Uterus (tissue), 4 donors: ENCODE measurements at regions of chr22 and their contacts with region 1.

Region 1: DNA sequence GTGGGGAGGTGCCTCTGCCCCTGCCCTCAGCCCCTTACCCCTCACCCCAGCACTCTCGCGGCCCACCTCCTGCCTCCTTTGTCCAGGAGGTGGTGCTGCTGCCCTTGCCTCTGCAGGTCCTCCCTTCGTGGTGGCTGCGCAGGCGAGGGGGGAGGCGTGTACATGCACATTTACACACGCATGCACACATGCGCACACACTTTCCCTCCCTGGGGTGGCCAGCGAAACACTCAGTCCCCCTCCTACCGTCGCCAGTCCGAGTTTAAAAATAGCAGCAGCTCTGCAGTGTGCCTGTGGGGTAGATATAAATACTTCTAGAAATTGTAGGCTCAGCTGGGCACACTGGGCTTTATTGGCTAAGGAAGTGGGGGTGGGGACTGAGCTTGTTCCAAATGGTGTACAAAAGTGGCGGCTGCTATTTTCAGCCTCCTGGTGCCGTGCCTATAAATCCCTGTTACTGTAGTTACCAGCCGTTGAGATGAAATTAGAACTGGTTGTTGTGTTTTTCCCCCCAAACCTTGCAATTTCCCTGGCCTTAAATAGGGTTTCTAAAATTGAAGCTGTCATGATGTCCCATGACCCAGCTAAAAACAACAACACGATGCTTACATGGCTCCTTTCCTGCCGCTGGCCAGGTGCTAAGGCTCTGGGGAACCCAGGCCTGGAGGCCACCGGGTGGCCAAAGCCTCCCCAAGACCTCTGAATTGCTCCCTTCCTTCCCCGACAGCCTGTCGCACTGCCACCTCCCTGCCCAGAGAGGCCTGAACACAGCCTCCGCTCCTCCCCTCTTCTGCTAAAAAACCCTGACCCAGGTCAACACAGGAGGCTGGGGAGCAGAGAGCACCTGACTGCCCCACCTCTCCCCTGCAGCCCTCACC is 12.4 kb downstream of the PICK1 start:
- DNase-seq: peak; percentile 71 to 74
- H3K4me3 ChIP-seq: no peak overlapping the region
- H3K27ac ChIP-seq: peak overlapping the region; percentile 66 to 83
- H3K4me1 ChIP-seq: no peaks in the 10 kb centered on the region
- H3K27me3 ChIP-seq: no peaks in the 10 kb centered on the region
- CTCF ChIP-seq: peak; percentile 55 to 68 (median 64)
- POLR2A ChIP-seq: no peak

Region 2: GRCh38 chr22:38569972-38570778 is 500.6 kb after region 1 on chr22 and contains the start of gene DMC1:
- intact Hi-C with region 1: loop called (anchors 10 kb)
- DNase-seq: peak; percentile 96 to 98
- H3K4me3 ChIP-seq: peak within 1 kb of the TSS; percentile 55 to 68
- H3K27ac ChIP-seq: peak within 1 kb of the TSS; percentile 85 to 89
- H3K4me1 ChIP-seq: peaks cover 3 to 7% of the 10 kb centered on the region in 2 donors
- H3K27me3 ChIP-seq: no peaks in the 10 kb centered on the region
- CTCF ChIP-seq: no peak
- POLR2A ChIP-seq: peak; percentile 49 to 53
- total RNA-seq, gene DMC1: 0.26 to 8.4 (median 5.2) TPM in 3 of 4 donors, not detected in the other